Ovary (tissue), 10 donors: ENCODE measurements at regions of chr7 and their contacts with region 1.

Region 1: DNA sequence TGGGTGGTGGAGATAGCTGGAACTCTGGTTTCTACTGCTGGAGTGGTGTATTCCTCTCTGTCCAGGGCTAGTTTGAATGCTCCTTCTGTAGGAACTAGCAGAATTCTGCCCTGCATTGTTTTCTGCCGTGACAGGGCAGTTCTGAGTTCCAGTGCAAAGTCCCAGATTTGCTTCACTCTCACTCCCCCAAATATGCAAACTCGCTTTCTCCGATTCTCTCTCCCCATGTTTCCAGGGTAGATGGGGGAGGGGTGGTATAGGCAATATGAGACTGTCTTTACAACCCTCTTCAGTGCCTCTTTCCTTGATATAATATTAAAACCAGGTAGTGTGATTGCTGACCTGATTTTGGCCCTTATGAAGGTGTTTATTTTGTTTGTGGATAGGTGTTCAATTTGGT is 693.3 kb upstream of the GRM3 start:
- DNase-seq: no peak
- H3K4me3 ChIP-seq: no peak overlapping the region
- H3K27ac ChIP-seq: no peak overlapping the region
- H3K4me1 ChIP-seq: no peaks in the 10 kb centered on the region
- H3K27me3 ChIP-seq: no peaks in the 10 kb centered on the region
- CTCF ChIP-seq: no peak
- EP300 ChIP-seq: no peak
- POLR2A ChIP-seq: no peak

Region 2: GRCh38 chr7:85776691-85777345 is 173.6 kb before region 1 on chr7:
- intact Hi-C with region 1: no loop called
- DNase-seq: no peak
- H3K4me3 ChIP-seq: no peak overlapping the region
- H3K27ac ChIP-seq: no peak overlapping the region
- H3K4me1 ChIP-seq: no peaks in the 10 kb centered on the region
- H3K27me3 ChIP-seq: no peaks in the 10 kb centered on the region
- CTCF ChIP-seq: no peak
- EP300 ChIP-seq: no peak
- POLR2A ChIP-seq: no peak

Region 3: DNA sequence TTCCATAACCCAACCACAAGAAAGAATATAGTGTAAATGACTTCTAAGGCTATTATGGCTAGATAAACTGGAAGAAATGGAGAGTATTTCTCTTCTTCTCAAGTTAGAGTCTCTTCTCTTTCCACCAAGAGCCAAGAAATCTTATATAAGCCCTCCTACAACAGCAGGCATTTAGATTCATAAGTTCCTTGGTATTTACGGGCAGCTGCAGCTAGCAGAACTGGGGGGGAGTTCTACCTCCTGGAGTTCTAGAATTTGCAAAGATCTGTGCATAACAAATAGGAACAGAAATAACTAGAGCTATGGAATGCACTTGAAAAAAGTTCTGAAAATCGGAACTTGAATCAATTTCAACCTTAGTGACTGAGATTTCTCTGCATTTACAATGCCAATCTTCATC is 21.9 kb before region 1 on chr7:
- intact Hi-C with region 1: loop called in 1 of 4 experiments (anchors 1 kb)
- DNase-seq: no peak
- H3K4me3 ChIP-seq: no peak overlapping the region
- H3K27ac ChIP-seq: no peak overlapping the region
- H3K4me1 ChIP-seq: no peaks in the 10 kb centered on the region
- H3K27me3 ChIP-seq: no peaks in the 10 kb centered on the region
- CTCF ChIP-seq: no peak
- EP300 ChIP-seq: no peak
- POLR2A ChIP-seq: no peak

Region 4: GRCh38 chr7:86025807-86026206 is 75.4 kb after region 1 on chr7:
- intact Hi-C with region 1: no loop called
- DNase-seq: no peak
- H3K4me3 ChIP-seq: no peak overlapping the region
- H3K27ac ChIP-seq: no peak overlapping the region
- H3K4me1 ChIP-seq: no peaks in the 10 kb centered on the region
- H3K27me3 ChIP-seq: no peaks in the 10 kb centered on the region
- CTCF ChIP-seq: no peak
- EP300 ChIP-seq: no peak
- POLR2A ChIP-seq: no peak